ENCODE measurements at regions of chr10 and their contacts with region 1.

Region 1: GRCh38 chr10:44965651-44966097 is 6.1 kb downstream of the RASSF4 start:
- DNase-seq: peak in 1 of 9 experiments; percentile 36
- ATAC-seq: no peak
- H3K4me3 ChIP-seq: no peak overlapping the region
- H3K4me3 Mint-ChIP-seq: no peak overlapping the region
- H3K27ac ChIP-seq: no peak overlapping the region
- H3K27ac Mint-ChIP-seq: no peak overlapping the region
- H3K4me1 ChIP-seq: peaks cover 28% of the 10 kb centered on the region
- H3K4me1 Mint-ChIP-seq: peaks cover 31% of the 10 kb centered on the region
- H3K27me3 ChIP-seq: no peaks in the 10 kb centered on the region
- H3K27me3 Mint-ChIP-seq: no peaks in the 10 kb centered on the region
- CTCF ChIP-seq: no peak

Region 2: GRCh38 chr10:44952779-44953231 is 12.9 kb before region 1 on chr10:
- CTCF ChIA-PET with region 1: interaction called, 4 read pairs
- POLR2A ChIA-PET with region 1: interaction called, 3 read pairs
- intact Hi-C with region 1: loop called in 1 of 2 experiments (anchors 2 kb)
- DNase-seq: no peak
- ATAC-seq: no peak
- H3K4me3 ChIP-seq: no peak overlapping the region
- H3K4me3 Mint-ChIP-seq: no peak overlapping the region
- H3K27ac ChIP-seq: no peak overlapping the region
- H3K27ac Mint-ChIP-seq: no peak overlapping the region
- H3K4me1 ChIP-seq: no peaks in the 10 kb centered on the region
- H3K4me1 Mint-ChIP-seq: peaks cover 13% of the 10 kb centered on the region
- H3K27me3 ChIP-seq: no peaks in the 10 kb centered on the region
- H3K27me3 Mint-ChIP-seq: no peaks in the 10 kb centered on the region
- CTCF ChIP-seq: no peak